Endothelial cell of umbilical vein (primary cell): ENCODE measurements at regions of chr1 and their contacts with region 1.

Region 1: GRCh38 chr1:39919545-39919944 is 17.8 kb upstream of the MYCL start:
- DNase-seq: peak; percentile 49
- H3K4me3 ChIP-seq: no peak overlapping the region
- H3K27ac ChIP-seq: no peak overlapping the region
- H3K4me1 ChIP-seq: no peaks in the 10 kb centered on the region
- H3K27me3 ChIP-seq: peaks cover 0 to 10% of the 10 kb centered on the region in 2 experiments
- CTCF ChIP-seq: peak; percentile 27 to 38
- POLR2A ChIP-seq: no peak

Region 2: DNA sequence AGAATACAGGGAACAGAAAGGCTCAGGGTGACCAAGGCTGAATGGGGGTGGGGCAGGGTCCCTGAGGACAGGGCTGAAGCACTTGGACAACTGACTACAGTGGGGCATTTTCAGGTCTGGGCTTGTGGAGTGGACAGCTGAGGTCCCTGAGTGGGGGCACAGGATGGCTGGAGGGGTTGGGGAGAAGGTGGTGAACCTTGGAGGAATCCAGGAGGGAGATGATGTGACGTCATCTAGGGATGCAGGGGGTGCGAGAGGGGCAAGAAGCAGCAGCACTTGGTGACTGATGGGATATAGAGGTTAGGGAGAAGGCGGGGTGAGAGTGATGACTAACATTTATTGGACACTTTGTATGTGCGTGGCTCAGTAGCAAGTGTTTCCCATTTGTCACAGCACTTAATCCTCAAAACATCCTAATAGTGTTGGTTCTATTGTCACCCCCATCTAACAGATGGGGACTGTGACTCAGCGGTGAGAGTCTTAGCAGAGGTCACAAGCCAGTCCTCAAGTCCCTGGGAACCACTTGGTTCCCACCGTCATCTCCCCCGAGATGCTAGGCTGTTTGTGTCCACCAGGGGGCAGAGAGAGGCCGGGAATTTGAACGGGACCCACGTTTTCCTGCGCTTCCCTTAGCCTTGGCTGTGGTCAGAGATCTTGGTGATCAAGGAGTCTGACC is 103.0 kb before region 1 on chr1:
- CTCF ChIA-PET with region 1: interaction called, 8 read pairs
- POLR2A ChIA-PET with region 1: no interaction called
- dilution Hi-C with region 1: no loop called
- intact Hi-C with region 1: loop called (anchors 5 kb)
- DNase-seq: peak; percentile 78
- H3K4me3 ChIP-seq: no peak overlapping the region
- H3K27ac ChIP-seq: no peak overlapping the region
- H3K4me1 ChIP-seq: no peaks in the 10 kb centered on the region
- H3K27me3 ChIP-seq: no peaks in the 10 kb centered on the region
- CTCF ChIP-seq: peak; percentile 77 to 78
- POLR2A ChIP-seq: no peak

Region 3: DNA sequence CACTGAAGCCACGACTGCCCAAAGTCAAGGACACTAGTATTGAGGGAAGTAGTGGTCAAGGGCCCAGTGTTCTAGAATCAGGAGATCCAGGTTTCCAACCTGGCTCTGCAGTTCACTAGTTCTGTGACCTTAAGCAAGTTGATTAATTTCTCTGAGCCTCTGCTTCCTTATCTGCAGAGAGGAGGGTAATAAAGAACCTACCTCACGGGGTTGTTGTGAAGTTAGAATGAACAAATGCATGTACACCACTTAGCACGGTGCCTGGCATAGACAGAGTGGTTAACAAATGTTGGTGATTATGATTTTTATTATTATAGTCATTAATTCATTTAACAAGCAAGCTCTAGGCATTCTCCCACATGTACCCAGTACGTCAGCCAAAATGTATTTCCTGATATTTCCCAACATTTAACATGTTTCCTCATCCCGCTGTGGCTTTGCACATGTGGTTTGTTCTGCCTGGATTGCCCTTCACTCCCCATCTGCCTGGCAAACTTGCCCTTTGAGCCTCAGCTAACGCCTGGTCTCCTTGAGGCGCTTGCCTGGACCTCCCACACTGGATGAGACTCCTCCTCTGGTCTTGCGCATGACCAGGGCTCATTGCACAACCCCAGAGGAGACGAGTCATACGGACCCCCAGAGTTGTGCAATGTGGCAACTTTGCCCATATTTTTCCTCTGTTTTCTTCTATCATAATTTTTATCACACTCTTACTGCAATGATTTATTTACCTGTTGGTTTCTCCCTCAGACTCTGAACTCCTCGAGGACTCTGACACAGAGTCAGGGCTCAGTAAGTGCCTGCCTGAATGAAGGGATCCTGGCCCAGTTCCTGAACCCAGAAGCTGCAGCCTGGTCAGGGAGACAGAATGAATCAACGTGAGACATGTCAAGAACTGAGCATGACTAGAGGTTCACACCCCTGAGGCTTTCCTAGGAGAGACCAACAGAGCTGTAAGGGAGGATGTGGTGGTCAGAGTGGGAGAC is 14.7 kb after region 1 on chr1:
- CTCF ChIA-PET with region 1: interaction called, 10 read pairs
- POLR2A ChIA-PET with region 1: no interaction called
- dilution Hi-C with region 1: no loop called
- intact Hi-C with region 1: no loop called
- DNase-seq: no peak
- H3K4me3 ChIP-seq: no peak overlapping the region
- H3K27ac ChIP-seq: no peak overlapping the region
- H3K4me1 ChIP-seq: no peaks in the 10 kb centered on the region
- H3K27me3 ChIP-seq: no peaks in the 10 kb centered on the region
- CTCF ChIP-seq: no peak
- POLR2A ChIP-seq: no peak

Region 4: DNA sequence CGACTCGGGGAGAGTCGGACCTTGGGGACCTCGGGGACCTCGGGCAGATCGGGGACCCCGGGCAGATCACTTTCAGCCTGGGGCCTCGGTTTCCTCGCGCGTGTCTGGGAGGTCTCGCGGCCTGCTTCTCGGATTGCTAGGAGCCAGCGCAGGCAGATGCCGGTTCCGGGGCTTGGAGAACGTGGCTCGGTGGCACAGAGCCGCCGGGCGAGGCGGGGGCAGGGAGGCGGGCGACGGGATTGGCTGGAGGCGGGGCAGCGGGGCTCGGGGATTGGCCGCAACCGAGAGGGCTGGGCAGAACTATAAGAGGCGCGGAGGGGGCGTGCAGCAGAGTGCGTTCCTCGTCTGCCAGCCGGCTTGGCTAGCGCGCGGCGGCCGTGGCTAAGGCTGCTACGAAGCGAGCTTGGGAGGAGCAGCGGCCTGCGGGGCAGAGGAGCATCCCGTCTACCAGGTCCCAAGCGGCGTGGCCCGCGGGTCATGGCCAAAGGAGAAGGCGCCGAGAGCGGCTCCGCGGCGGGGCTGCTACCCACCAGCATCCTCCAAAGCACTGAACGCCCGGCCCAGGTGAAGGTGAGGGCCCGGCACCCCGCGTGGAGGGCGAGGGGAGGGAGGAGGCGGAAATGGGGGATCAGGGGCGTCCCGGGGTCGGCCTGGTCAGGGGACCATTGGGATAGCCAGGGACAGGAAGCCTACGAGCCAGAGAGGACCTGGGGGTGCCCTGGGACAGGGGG is 35.4 kb after region 1 on chr1 and contains the start of gene MFSD2A:
- CTCF ChIA-PET with region 1: interaction called, 19 read pairs
- POLR2A ChIA-PET with region 1: interaction called, 5 read pairs
- dilution Hi-C with region 1: no loop called
- intact Hi-C with region 1: loop called (anchors 5 kb)
- DNase-seq: peak; percentile 91
- H3K4me3 ChIP-seq: peak within 1 kb of the TSS; percentile 47 to 87 (median 75)
- H3K27ac ChIP-seq: peak within 1 kb of the TSS; percentile 10
- H3K4me1 ChIP-seq: peaks cover 12% of the 10 kb centered on the region
- H3K27me3 ChIP-seq: no peaks in the 10 kb centered on the region
- CTCF ChIP-seq: no peak
- POLR2A ChIP-seq: no peak
- total RNA-seq, gene MFSD2A: 4.3 and 5.5 TPM in 2 replicates